Posterior vena cava (tissue), 2 donors: ENCODE measurements at regions of chr6 and their contacts with region 1.

Region 1: GRCh38 chr6:6683969-6684833 is 95.7 kb downstream of the LY86 start:
- DNase-seq: no peak

Region 2: GRCh38 chr6:6629402-6629801 is 54.8 kb before region 1 on chr6:
- intact Hi-C with region 1: no loop called
- DNase-seq: no peak

Region 3: DNA sequence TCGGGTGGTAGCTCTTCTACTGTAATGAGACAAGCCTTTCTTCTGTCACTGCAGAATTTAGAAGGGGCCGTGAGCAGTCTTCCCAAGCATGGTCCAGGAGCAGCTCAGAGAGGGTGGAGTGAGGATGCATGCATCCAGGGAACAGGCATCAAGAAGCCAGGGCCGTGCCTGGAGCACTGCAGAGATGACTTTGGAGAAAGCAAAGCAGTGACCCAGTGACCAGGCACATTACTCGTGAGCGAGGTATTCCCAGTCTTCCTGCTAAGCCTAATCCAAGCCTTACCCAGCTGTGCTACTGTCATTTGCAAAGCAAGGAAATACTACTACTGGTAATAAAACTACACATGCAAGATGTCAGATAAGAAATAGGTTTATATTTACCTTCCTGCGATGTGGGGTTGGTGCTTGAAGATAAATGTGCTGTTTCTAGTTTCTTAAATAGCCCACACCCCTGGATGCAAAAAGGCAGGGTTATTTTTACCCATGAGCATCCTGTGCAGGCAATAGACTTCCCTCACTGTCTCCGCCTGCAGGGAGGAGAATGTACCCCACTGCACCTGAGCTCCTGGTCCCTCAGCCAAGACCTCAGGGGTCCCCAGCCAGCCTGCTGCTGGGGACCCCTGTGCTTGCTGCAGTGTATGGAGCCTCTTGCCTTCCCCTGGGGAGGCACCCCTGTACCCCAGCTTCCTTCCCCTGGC is 565.9 kb after region 1 on chr6:
- intact Hi-C with region 1: loop called in 1 of 2 experiments (anchors 5 kb)
- DNase-seq: peak; percentile 62